Common myeloid progenitor, CD34-positive (primary cell): ENCODE measurements at regions of chr6 and their contacts with region 1.

Region 1: DNA sequence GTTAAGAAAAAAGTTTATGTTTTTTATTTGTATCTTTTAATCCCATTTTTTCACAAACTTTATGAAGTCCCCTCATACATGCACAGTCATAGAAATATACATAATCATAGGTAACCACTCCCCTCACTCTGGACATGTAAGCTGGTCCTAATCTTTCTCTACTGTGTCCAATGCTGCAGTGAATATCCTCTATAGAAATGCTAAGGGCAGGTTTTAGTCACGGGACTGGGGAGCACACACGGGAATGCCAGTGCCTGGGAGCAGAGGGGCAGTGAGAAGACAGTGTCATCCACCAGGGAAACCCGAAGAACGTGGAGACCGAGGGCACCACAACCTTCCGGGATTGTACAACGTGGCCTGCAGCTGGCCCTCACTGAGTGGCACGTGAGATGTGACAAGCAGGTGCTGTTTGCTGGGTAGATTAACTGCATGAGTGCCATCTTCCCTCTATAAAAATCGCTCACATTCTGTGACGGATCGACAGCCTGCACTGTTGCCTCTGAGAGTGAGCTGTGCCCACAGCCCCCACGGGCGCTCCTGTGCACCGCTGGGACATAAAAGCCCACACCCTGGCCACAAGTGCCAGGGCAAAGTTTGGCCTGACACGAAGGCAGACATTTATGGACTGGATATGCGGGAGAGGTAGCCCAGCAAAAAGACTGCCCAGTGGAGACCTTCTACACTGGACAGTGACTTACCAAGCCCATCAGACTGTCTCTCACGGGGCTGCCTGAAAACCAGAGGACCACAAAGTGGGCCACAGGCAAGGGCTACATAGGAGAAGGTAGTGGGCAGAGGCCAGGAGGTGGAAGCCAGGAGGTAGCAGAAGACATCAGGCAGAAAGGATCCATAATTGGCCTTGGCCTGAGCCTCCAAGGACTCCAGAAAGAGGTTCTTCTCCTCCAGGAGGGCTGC is 63.2 kb downstream of the FGD2 start:
- DNase-seq: no peak
- H3K4me3 ChIP-seq: no peak overlapping the region
- H3K27ac ChIP-seq: no peak overlapping the region
- H3K4me1 ChIP-seq: peaks cover 3 to 24% (median 8%) of the 10 kb centered on the region in 4 experiments
- H3K27me3 ChIP-seq: no peaks in the 10 kb centered on the region

Region 2: DNA sequence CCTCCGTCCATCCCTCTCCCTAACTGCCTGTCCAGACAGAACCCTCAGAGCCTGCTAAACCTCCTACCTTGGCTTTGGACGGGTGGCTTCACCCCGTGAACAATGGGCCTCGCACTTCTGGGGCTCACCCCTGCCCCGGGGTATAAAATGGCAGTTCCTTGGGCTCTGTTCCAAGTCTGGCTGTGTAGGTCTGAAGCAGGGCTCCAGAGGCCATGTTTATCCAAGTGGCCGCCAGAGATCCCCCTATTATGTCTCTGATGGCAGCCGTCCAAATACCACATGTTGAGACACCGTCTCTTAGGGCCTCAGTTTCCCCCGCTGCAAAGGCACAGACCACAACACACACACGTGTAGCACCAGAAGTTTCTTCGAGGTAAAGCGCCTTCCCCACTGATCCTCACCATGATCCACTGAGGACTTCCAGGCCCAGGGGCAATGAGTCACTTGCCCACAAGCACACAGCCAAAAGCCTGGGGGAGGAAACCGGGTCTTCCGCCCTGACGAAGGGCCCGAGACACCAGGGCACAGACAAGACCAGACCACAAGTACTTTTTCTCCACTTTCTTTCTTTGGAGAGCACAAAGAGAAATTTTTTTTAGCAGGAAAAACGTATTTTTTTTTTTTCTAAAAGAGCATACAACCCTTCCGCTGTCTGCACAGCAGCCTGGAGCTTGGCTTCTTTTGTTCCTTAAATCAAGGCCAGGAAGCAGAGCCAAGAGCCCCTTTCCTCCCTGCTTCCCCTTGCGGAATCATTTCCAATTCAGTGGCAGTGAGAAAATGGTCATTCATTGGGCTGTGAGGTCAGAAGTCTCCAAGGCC is 241.1 kb before region 1 on chr6:
- CTCF ChIA-PET with region 1: no interaction called
- POLR2A ChIA-PET with region 1: no interaction called
- DNase-seq: peak; percentile 90 to 96 (median 94)
- H3K4me3 ChIP-seq: peak overlapping the region in 3 of 7 experiments; percentile 7 to 26 (median 17)
- H3K27ac ChIP-seq: no peak overlapping the region
- H3K4me1 ChIP-seq: peaks cover 2 to 30% (median 24%) of the 10 kb centered on the region in 4 experiments
- H3K27me3 ChIP-seq: peaks cover 0 to 2% (median 0%) of the 10 kb centered on the region in 5 experiments

Region 3: DNA sequence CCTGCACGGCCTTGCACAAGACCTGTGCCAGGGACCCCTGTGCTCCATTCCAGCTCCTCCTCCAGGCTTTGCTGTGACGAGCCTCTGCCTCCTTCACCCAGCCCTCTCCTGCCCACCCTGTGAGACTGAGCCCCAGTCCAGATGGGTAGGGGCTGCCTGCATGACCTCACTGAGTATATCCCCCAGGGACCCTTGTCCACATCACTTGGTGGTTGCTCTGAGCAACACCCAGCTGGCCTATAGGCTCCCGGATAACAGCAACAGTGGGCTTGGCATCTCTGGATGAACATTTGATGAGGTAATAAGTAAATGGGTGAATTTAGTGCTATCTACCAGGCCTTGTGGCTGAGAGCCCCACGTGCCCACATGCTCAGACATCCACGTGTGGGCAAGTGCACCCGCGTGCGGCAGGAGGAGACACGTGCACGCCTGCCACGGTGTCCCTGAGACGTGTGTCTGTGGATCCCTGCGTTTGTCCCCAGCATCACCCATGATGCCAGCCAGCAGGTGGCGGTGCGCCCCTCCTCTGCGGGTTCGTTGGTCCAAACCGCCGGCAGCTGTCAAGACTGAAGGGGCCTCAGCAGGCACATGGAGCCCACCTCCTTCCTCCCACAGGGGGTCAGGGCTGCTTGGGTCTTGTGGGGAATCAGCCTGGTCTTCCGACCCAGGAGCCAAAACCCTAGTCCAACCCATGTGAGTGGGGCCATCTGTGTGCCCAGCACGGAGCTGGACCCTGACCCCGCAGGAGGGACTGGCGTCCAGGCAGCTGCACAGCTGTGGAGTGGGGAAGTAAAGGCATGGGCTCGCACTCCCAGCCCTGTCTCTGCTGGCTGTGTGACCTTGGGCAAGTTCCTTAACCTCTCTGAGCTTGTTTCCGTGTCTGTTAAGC is 17.2 kb before region 1 on chr6:
- CTCF ChIA-PET with region 1: interaction called, 16 read pairs
- POLR2A ChIA-PET with region 1: no interaction called
- DNase-seq: peak; percentile 89 to 94 (median 94)
- H3K4me3 ChIP-seq: peak overlapping the region in 3 of 7 experiments; percentile 7 to 58 (median 29)
- H3K27ac ChIP-seq: peak overlapping the region in 1 of 2 experiments; percentile 86
- H3K4me1 ChIP-seq: peaks cover 14 to 77% (median 53%) of the 10 kb centered on the region in 4 experiments
- H3K27me3 ChIP-seq: no peaks in the 10 kb centered on the region